ENCODE measurements at regions of chr16 and their contacts with region 1.

Region 1: GRCh38 chr16:87636072-87636684 is 33.9 kb downstream of the JPH3 start:
- DNase-seq: peak; percentile 84
- H3K4me3 ChIP-seq: peak overlapping the region in 2 of 4 donors; percentile 13 to 20
- H3K27ac ChIP-seq: no peak overlapping the region
- H3K4me1 ChIP-seq: peaks cover 8 to 18% (median 12%) of the 10 kb centered on the region in 4 donors
- H3K27me3 ChIP-seq: peaks cover 32% of the 10 kb centered on the region
- CTCF ChIP-seq: peak; percentile 39 to 63 (median 60)
- EP300 ChIP-seq: no peak
- POLR2A ChIP-seq: no peak

Region 2: DNA sequence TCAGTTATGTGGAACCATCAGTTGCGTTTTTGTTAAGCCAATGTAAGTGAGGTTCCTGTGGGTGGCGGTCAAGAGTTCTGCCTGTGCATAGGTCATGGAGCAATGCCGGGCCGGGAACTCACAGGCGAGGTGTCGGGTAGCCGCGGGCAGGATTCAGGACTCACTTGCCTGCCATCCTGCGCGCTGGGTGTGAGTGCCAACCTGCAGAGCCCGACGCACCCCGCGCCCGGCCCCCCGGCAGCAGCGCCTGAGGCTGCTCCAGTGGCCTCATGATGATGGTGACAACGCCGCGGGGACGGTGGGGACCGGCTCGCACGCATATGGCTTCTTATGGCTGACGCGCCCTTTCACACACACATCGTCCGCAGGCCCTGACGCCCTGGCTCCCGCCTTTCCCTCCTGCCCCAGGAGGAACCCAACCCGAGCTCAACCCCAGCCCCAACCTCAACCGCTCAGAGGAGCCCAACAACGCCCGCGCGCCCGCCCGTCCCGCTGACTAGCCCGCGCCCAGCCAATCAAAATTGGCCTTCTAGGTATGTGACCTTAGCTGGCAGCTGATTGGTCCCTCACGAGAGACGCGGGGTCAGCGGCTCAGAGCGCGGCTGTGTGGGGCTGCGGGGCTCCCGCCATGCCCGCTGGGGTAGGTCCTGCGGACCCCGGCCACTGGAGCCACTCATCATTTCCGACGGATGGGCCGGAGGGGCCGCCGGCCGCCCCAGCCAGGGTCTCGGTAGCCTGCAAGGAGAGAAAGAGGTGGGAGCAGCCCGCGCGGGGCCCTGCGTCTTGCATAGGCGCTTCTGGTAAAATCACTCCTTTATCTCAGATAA is 319.0 kb before region 1 on chr16 and contains the start of gene C16orf95:
- in situ Hi-C with region 1: loop called in 1 of 4 experiments (anchors 25 kb)
- intact Hi-C with region 1: no loop called
- DNase-seq: peak; percentile 97
- H3K4me3 ChIP-seq: peak within 1 kb of the TSS; percentile 80 to 98 (median 89)
- H3K27ac ChIP-seq: peak within 1 kb of the TSS; percentile 96 to 98 (median 96)
- H3K4me1 ChIP-seq: peaks cover 7 to 11% (median 9%) of the 10 kb centered on the region in 4 donors
- H3K27me3 ChIP-seq: no peaks in the 10 kb centered on the region
- CTCF ChIP-seq: peak; percentile 55 to 83 (median 66)
- EP300 ChIP-seq: no peak
- POLR2A ChIP-seq: peak; percentile 95
- total RNA-seq, gene C16orf95: 1.1 to 2.3 TPM in 2 of 4 donors, not detected in the others

Region 3: DNA sequence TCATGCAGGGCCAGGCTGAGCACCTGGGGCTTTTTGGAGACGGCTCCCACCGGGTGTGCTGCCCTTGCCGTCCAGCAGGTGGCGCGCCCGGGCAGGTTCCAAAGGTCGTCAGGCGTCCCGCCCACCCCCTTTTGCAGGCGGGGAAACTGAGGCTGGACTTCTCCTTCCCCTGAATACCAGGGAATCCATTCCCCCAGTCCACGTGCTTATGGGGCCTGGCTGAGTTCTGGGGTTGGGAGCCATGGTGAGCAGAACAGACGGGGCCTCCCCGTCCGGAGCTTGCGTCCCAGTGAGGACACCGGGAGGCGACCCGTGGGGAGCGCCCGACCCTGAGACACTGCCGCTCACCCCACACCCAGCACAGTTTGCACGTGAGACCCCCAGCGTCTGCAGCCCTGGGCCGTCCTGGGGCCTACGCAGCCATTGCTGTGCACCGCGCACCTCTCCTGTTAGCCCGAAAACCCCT is 85.6 kb before region 1 on chr16:
- in situ Hi-C with region 1: no loop called
- intact Hi-C with region 1: loop called (anchors 2 kb)
- DNase-seq: peak; percentile 41
- H3K4me3 ChIP-seq: no peak overlapping the region
- H3K27ac ChIP-seq: no peak overlapping the region
- H3K4me1 ChIP-seq: peaks cover 0 to 3% (median 0%) of the 10 kb centered on the region in 4 donors
- H3K27me3 ChIP-seq: peaks cover 2% of the 10 kb centered on the region
- CTCF ChIP-seq: peak; percentile 82 to 96 (median 93)
- EP300 ChIP-seq: no peak
- POLR2A ChIP-seq: no peak